Esophagus squamous epithelium (tissue), 5 donors: ENCODE measurements at regions of chr10 and their contacts with region 1.

Region 1: DNA sequence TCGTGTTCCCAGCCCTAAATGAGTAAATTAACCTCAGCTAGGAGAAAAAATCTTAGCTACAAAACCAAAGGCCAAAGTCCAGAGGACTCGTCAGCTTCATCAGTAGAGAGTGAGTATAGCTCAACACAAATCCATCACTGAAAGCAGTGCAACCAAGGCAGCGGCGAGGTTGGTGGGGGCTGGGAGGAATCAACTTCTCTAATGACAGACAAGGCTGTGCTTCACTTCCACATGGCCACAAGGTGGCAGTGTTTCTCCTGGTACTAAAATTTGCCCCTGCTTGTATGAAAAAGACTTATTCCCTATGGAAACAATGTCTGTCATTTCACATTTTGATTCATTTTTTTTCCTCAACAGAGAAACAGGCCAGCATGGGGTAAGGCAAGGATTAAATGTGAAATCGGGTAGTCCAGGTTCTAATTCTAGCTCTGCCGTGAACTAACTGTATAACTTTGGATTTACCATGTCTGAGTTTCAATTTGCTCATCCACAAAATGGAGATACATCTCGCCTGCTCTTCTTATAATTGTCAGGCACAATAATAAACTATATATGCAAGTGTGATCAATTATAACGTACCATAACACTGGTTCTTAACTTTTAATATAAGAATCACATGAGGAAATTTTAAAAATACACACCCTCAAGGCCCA is 39.3 kb downstream of the FAS start:
- DNase-seq: no peak
- H3K4me3 ChIP-seq: no peak overlapping the region
- H3K27ac ChIP-seq: peak overlapping the region in 2 of 4 donors; percentile 37 to 76
- H3K4me1 ChIP-seq: peaks cover 0 to 40% (median 22%) of the 10 kb centered on the region in 3 donors
- H3K27me3 ChIP-seq: no peaks in the 10 kb centered on the region
- CTCF ChIP-seq: peak; percentile 82 to 96 (median 92)
- POLR2A ChIP-seq: no peak

Region 2: GRCh38 chr10:89217057-89217990 is 187.4 kb after region 1 on chr10:
- intact Hi-C with region 1: loop called (anchors 5 kb)
- DNase-seq: no peak
- H3K4me3 ChIP-seq: no peak overlapping the region
- H3K27ac ChIP-seq: peak overlapping the region; percentile 17 to 69 (median 30)
- H3K4me1 ChIP-seq: peaks cover 5 to 51% (median 11%) of the 10 kb centered on the region in 3 donors
- H3K27me3 ChIP-seq: no peaks in the 10 kb centered on the region
- CTCF ChIP-seq: peak; percentile 62 to 84 (median 80)
- POLR2A ChIP-seq: no peak

Region 3: GRCh38 chr10:89351780-89352597 is 322.1 kb after region 1 on chr10:
- intact Hi-C with region 1: no loop called
- DNase-seq: no peak
- H3K4me3 ChIP-seq: no peak overlapping the region
- H3K27ac ChIP-seq: peak overlapping the region; percentile 20 to 83 (median 82)
- H3K4me1 ChIP-seq: peaks cover 12 to 44% (median 29%) of the 10 kb centered on the region in 3 donors
- H3K27me3 ChIP-seq: no peaks in the 10 kb centered on the region
- CTCF ChIP-seq: no peak
- POLR2A ChIP-seq: no peak